H1 (cell line): ENCODE measurements at regions of chr11 and their contacts with region 1.

Region 1: DNA sequence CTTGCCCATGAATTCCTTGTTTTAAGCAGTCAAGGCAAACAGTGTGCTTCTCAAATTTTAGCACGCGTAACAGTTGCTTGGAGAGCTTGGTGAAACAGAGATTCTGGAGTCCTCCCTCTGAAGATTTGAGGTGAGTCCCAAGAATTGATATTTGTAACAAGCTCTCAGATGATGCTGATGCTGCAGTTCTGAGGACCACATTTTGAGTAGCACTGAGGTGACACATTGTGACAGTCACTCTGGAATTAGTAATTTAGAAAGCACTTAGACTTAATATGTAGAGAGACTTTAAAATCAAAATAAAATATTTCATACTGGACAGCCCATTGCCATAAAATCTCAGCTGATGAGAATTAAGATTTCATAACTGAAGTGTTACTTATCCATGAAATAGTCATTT is 38.5 kb downstream of the DNAJC24 start:
- DNase-seq: no peak
- H3K4me3 ChIP-seq: no peak overlapping the region
- H3K27ac ChIP-seq: no peak overlapping the region
- H3K4me1 ChIP-seq: no peaks in the 10 kb centered on the region
- H3K27me3 ChIP-seq: no peaks in the 10 kb centered on the region
- CTCF ChIP-seq: no peak
- EP300 ChIP-seq: no peak
- POLR2A ChIP-seq: no peak
- RAD21 ChIP-seq: no peak

Region 2: GRCh38 chr11:31397239-31397834 is 10.9 kb before region 1 on chr11:
- CTCF ChIA-PET with region 1: interaction called, 11 read pairs
- POLR2A ChIA-PET with region 1: no interaction called
- DNase-seq: no peak
- H3K4me3 ChIP-seq: no peak overlapping the region
- H3K27ac ChIP-seq: no peak overlapping the region
- H3K4me1 ChIP-seq: no peaks in the 10 kb centered on the region
- H3K27me3 ChIP-seq: no peaks in the 10 kb centered on the region
- CTCF ChIP-seq: peak in 2 of 3 experiments; percentile 42 to 62; a peak in 2 of 4 replicates
- EP300 ChIP-seq: no peak
- POLR2A ChIP-seq: no peak
- RAD21 ChIP-seq: peak in 1 of 2 experiments; percentile 78